ENCODE measurements at regions of chr3 and their contacts with region 1.

Region 1: DNA sequence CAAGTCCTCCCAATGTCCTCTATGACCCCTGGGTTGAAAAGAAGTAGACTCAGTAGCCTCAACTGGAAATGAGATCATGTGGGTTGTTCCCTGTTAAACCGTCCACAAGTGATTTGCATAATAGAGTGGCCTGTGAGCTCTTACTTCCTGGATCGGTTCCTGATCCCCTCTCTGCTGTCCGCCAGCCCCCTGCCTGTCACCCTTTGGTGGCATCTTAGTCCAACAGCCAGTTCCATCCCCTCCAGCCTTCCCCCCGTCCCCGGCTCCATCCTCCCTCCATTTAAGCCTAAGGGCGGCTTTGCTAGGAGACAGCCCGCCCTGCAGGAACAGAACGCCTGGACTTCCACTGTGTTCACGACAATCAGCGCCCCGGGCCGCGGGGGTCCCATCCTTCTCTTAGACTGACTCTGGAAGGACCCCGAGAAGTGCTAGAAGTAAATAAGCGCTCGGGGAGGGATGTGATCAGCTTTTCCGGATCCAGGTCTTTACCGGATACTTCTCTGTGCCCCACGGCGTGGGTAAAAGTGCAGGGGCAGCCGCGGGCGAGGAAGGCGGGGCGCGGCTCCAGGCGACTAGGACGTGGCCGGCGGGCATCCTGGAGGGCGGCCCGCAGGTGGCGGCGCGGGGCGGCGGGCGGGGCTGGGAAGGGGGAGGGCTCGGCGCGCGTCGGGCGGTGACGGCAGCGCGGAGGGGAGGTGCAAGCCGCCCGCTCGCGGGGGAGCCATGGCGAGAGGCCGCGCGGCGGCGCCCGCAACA is 51.2 kb upstream of the ULK4 start:
- DNase-seq: peak; percentile 75 to 84
- ATAC-seq: peak; percentile 80

Region 2: GRCh38 chr3:41961750-41962679 is 51.1 kb before region 1 on chr3 and contains the start of gene ULK4:
- intact Hi-C with region 1: loop called in 1 of 2 experiments (anchors 5 kb)
- DNase-seq: peak; percentile 96 to 98
- ATAC-seq: peak; percentile 96
- total RNA-seq, gene ULK4: 5.3 to 5.7 TPM

Region 3: DNA sequence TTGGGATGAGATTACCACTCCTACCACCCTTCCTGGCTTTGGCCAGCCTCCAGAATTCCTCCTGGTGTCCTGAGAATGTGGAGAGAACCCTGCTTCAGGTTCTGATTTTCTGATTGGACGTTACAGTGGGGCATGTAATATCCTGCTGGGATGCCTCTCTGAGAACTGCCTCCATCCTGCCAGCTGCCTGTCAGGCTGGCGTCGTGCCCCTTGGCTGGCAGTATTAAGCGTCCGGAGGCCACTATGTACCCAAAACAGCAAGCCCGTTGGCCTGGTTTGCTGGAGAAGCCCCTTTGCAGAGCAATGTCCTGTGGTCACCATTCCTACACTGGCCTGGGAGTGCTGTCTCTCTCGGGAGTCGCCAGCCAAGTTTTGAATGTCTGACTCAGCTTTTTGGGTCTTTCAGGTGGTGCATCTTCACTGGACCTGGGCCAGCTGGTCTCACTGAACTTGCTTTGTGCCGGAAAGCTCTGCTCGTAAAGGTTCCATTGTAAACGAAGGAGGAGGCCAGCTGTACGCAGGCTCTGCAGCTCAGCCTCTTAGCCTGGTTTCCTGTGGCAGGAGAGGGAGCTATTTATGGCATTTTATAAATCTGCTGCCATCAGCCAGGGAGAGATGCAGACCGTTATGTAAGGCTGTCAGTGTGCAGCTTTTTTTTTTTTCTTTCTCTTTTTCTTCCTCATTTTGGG is 58.9 kb after region 1 on chr3:
- intact Hi-C with region 1: loop called in 1 of 2 experiments (anchors 10 kb)
- DNase-seq: peak; percentile 76 to 86
- ATAC-seq: peak; percentile 63

Region 4: DNA sequence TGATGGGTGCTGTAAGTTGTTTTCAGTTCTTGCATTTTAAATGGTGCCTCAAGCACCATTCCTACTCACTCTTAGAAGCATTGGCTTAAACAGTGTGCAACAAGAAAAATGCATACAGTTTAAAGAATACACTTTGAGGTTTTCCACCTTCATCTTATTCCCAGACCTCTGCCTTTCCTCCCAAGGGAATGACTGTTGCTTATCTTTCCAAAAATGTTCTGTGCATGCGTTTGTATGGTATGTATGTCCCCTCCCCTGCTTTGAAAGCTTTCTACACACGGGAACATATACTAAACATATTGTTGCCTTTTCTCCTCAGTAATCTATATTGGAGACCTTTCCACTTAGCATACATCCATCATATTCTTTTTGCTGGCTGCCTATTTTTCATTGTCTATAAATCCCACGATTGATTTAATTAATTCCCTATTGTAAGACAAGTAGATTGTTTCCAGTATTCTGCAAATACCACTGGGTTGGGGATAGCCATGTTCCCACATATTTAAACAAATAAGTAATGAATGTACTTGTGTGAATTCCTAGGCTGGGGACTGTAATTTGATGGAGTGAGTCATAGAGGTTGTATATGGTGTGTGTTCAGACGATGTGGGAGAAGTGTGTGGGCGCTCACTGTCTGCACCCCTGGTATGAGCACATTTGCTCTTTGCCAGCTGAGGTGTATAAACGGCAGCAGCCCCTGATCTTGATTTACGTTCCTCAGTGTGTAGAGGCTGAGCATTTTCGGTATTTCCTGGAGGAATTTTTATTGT is 83.9 kb after region 1 on chr3:
- intact Hi-C with region 1: loop called in 1 of 2 experiments (anchors 5 kb)
- DNase-seq: no peak
- ATAC-seq: no peak

Region 5: GRCh38 chr3:42118762-42119361 is 105.7 kb after region 1 on chr3:
- intact Hi-C with region 1: no loop called
- DNase-seq: no peak
- ATAC-seq: peak; percentile 79

Measured in left colon (tissue), 2 donors.